ENCODE measurements at regions of chr14 and their contacts with region 1.

Region 1: GRCh38 chr14:77067632-77068514 is 30.2 kb upstream of the CIPC start:
- DNase-seq: peak; percentile 68
- ATAC-seq: peak; percentile 79
- H3K4me3 Mint-ChIP-seq: no peak overlapping the region
- H3K27ac Mint-ChIP-seq: no peak overlapping the region
- H3K4me1 Mint-ChIP-seq: no peaks in the 10 kb centered on the region
- H3K27me3 Mint-ChIP-seq: peaks cover 3% of the 10 kb centered on the region
- CTCF ChIP-seq: peak; percentile 83

Region 2: GRCh38 chr14:76904740-76905438 is 163.0 kb before region 1 on chr14:
- CTCF ChIA-PET with region 1: interaction called, 82 read pairs
- POLR2A ChIA-PET with region 1: interaction called, 3 read pairs
- intact Hi-C with region 1: no loop called
- DNase-seq: peak; percentile 95
- ATAC-seq: peak; percentile 93
- H3K4me3 Mint-ChIP-seq: no peak overlapping the region
- H3K27ac Mint-ChIP-seq: peak overlapping the region; percentile 76
- H3K4me1 Mint-ChIP-seq: peaks cover 18% of the 10 kb centered on the region
- H3K27me3 Mint-ChIP-seq: no peaks in the 10 kb centered on the region
- CTCF ChIP-seq: no peak

Region 3: GRCh38 chr14:76941946-76942805 is 125.7 kb before region 1 on chr14:
- CTCF ChIA-PET with region 1: interaction called, 11 read pairs
- POLR2A ChIA-PET with region 1: no interaction called
- intact Hi-C with region 1: no loop called
- DNase-seq: no peak
- ATAC-seq: peak; percentile 21
- H3K4me3 Mint-ChIP-seq: no peak overlapping the region
- H3K27ac Mint-ChIP-seq: no peak overlapping the region
- H3K4me1 Mint-ChIP-seq: peaks cover 19% of the 10 kb centered on the region
- H3K27me3 Mint-ChIP-seq: no peaks in the 10 kb centered on the region
- CTCF ChIP-seq: no peak

Region 4: GRCh38 chr14:77005559-77005958 is 62.3 kb before region 1 on chr14:
- CTCF ChIA-PET with region 1: no interaction called
- POLR2A ChIA-PET with region 1: no interaction called
- intact Hi-C with region 1: no loop called
- DNase-seq: no peak
- ATAC-seq: no peak
- H3K4me3 Mint-ChIP-seq: no peak overlapping the region
- H3K27ac Mint-ChIP-seq: no peak overlapping the region
- H3K4me1 Mint-ChIP-seq: peaks cover 9% of the 10 kb centered on the region
- H3K27me3 Mint-ChIP-seq: peaks cover 3% of the 10 kb centered on the region
- CTCF ChIP-seq: no peak

Region 5: GRCh38 chr14:77040059-77040740 is 27.7 kb before region 1 on chr14:
- CTCF ChIA-PET with region 1: interaction called, 12 read pairs
- POLR2A ChIA-PET with region 1: no interaction called
- intact Hi-C with region 1: no loop called
- DNase-seq: peak; percentile 97
- ATAC-seq: peak; percentile 66
- H3K4me3 Mint-ChIP-seq: peak overlapping the region; percentile 68
- H3K27ac Mint-ChIP-seq: peak overlapping the region; percentile 96
- H3K4me1 Mint-ChIP-seq: peaks cover 82% of the 10 kb centered on the region
- H3K27me3 Mint-ChIP-seq: no peaks in the 10 kb centered on the region
- CTCF ChIP-seq: no peak

Region 6: GRCh38 chr14:77053046-77053841 is 14.6 kb before region 1 on chr14:
- CTCF ChIA-PET with region 1: interaction called, 62 read pairs
- POLR2A ChIA-PET with region 1: interaction called, 3 read pairs
- intact Hi-C with region 1: no loop called
- DNase-seq: peak; percentile 90
- ATAC-seq: peak; percentile 93
- H3K4me3 Mint-ChIP-seq: no peak overlapping the region
- H3K27ac Mint-ChIP-seq: peak overlapping the region; percentile 75
- H3K4me1 Mint-ChIP-seq: peaks cover 17% of the 10 kb centered on the region
- H3K27me3 Mint-ChIP-seq: no peaks in the 10 kb centered on the region
- CTCF ChIP-seq: peak; percentile 100

Region 7: GRCh38 chr14:77091518-77091917 is 23.6 kb after region 1 on chr14:
- CTCF ChIA-PET with region 1: interaction called, 122 read pairs
- POLR2A ChIA-PET with region 1: interaction called, 4 read pairs
- intact Hi-C with region 1: no loop called
- DNase-seq: no peak
- ATAC-seq: no peak
- H3K4me3 Mint-ChIP-seq: no peak overlapping the region
- H3K27ac Mint-ChIP-seq: no peak overlapping the region
- H3K4me1 Mint-ChIP-seq: peaks cover 14% of the 10 kb centered on the region
- H3K27me3 Mint-ChIP-seq: no peaks in the 10 kb centered on the region
- CTCF ChIP-seq: no peak

Region 8: GRCh38 chr14:77151918-77152588 is 84.2 kb after region 1 on chr14:
- CTCF ChIA-PET with region 1: no interaction called
- POLR2A ChIA-PET with region 1: no interaction called
- intact Hi-C with region 1: no loop called
- DNase-seq: no peak
- ATAC-seq: peak; percentile 67
- H3K4me3 Mint-ChIP-seq: no peak overlapping the region
- H3K27ac Mint-ChIP-seq: no peak overlapping the region
- H3K4me1 Mint-ChIP-seq: no peaks in the 10 kb centered on the region
- H3K27me3 Mint-ChIP-seq: peaks cover 21% of the 10 kb centered on the region
- CTCF ChIP-seq: no peak

Measured in activated CD8-positive, alpha-beta T cell treated with anti-CD3 and anti-CD28 coated beads for 36 hours (primary cell).